MCF 10A (cell line): ENCODE measurements at regions of chr21 and their contacts with region 1.

Region 1: GRCh38 chr21:31366825-31367224 is 22.8 kb upstream of the TIAM1 start:
- DNase-seq: peak; percentile 97
- H3K4me3 Mint-ChIP-seq: no peak overlapping the region
- H3K27ac Mint-ChIP-seq: no peak overlapping the region
- H3K4me1 Mint-ChIP-seq: peaks cover 6% of the 10 kb centered on the region
- H3K27me3 Mint-ChIP-seq: no peaks in the 10 kb centered on the region
- CTCF ChIP-seq: no peak

Region 2: GRCh38 chr21:31354604-31355443 is 12.0 kb before region 1 on chr21:
- CTCF ChIA-PET with region 1: no interaction called
- POLR2A ChIA-PET with region 1: interaction called, 16 read pairs
- intact Hi-C with region 1: no loop called
- DNase-seq: peak; percentile 97
- H3K4me3 Mint-ChIP-seq: peak overlapping the region; percentile 28
- H3K27ac Mint-ChIP-seq: peak overlapping the region; percentile 86
- H3K4me1 Mint-ChIP-seq: peaks cover 29% of the 10 kb centered on the region
- H3K27me3 Mint-ChIP-seq: no peaks in the 10 kb centered on the region
- CTCF ChIP-seq: no peak